ENCODE measurements at regions of chr21 and their contacts with region 1.

Region 1: DNA sequence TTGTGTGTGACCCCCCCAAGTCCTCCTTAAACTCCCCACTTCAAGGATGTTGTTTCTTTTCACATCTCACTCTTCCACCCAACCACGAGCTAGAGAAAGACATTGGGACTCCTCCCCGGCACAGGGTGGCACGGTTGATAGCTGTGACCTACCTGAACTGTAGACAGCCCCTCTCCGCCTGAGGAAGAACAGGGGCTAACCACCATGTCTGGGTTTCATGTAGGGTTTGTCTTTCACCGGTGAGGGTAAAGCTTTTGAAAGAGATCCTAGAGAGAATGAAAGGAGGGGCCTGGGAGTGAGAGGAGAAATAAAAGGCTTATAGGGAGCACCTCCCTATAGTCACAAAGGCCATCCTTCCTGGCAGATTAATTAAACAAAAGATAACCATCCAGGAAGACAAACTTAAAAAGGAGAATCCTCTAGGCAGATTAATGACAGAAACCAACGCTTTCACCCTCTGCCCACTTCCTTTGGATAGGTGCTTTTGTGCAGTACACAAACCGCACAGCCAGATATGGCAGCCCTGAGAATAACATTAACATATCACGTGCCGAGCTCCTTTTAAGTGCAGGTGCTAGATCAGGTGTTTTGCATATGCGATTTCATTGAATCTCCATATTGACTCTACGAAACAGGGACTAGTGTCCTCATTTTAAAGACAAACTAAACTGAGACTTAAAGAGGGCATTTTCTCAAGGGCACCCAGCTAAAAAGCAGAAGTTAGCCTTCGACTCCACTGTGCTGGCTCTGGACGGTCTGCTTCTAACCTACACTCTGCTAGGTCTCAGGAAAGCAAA is 178.0 kb upstream of the RUNX1 start:
- DNase-seq: no peak
- H3K4me3 ChIP-seq: peak overlapping the region; percentile 13; the same call in 1 of the 2 replicates
- H3K27ac ChIP-seq: peak overlapping the region; percentile 99
- H3K4me1 ChIP-seq: peaks cover 85% of the 10 kb centered on the region
- H3K27me3 ChIP-seq: no peaks in the 10 kb centered on the region
- CTCF ChIP-seq: no peak

Region 2: GRCh38 chr21:34881894-34882371 is 345.2 kb before region 1 on chr21:
- CTCF ChIA-PET with region 1: interaction called, 11 read pairs
- POLR2A ChIA-PET with region 1: no interaction called
- intact Hi-C with region 1: no loop called
- DNase-seq: peak in 1 of 2 experiments; percentile 87
- H3K4me3 ChIP-seq: peak overlapping the region; percentile 97
- H3K27ac ChIP-seq: peak overlapping the region; percentile 99
- H3K4me1 ChIP-seq: peaks cover 69% of the 10 kb centered on the region
- H3K27me3 ChIP-seq: no peaks in the 10 kb centered on the region
- CTCF ChIP-seq: no peak

Region 3: GRCh38 chr21:34952701-34953100 is 274.4 kb before region 1 on chr21:
- CTCF ChIA-PET with region 1: no interaction called
- POLR2A ChIA-PET with region 1: no interaction called
- intact Hi-C with region 1: loop called (anchors 10 kb)
- DNase-seq: peak in 1 of 2 experiments; percentile 43
- H3K4me3 ChIP-seq: no peak overlapping the region
- H3K27ac ChIP-seq: no peak overlapping the region
- H3K4me1 ChIP-seq: 0 out of 2 replicates have a peak, but pooled peaks cover 9% of the 10 kb centered on the region
- H3K27me3 ChIP-seq: no peaks in the 10 kb centered on the region
- CTCF ChIP-seq: no peak

Region 4: DNA sequence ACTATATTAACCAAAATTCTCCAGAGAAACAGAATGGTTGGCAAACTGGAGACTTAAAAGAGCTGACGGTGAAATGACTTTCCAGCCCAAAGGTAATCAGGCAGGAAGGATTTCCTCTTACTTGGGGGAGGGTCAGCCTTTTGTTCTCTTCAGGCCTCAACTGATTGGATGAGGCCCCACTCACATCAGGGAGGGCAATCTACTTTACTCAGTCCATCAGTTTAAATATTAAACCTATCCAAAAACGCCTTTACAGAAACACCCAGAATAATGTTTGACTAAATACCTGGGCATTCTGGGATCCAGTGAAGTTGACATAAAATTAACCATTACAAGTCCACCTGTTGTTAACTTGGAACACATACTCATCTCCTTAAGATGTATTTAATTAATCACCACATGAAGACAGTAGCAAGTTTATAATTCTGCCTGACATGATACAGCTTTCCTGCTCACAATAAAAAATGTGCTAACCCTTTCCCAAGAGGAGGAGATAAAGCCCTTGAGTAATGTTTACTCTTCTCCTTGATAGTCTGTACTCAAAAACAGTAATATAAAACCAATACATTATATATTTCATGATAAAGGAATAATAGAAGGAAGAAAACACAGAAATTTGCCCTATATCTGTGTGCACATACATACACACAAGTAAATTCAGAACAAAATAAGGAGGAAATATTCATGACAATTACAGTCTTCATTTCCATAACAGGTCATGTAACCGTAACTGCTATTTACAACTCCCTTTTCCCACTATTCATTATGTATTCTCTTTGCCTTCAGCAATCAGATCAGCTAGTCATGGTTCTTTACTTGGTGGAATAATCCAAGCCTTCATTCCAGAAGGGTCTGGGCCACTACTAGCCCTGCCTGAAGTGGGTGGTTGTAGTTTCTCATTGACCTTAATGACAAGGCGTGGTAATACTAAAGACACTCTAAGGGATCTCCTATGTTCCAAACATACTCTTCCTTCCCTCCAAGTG is 70.6 kb before region 1 on chr21:
- CTCF ChIA-PET with region 1: interaction called, 13 read pairs
- POLR2A ChIA-PET with region 1: no interaction called
- intact Hi-C with region 1: no loop called
- DNase-seq: no peak
- H3K4me3 ChIP-seq: no peak overlapping the region
- H3K27ac ChIP-seq: no peak overlapping the region
- H3K4me1 ChIP-seq: 0 out of 2 replicates have a peak, but pooled peaks cover 6% of the 10 kb centered on the region
- H3K27me3 ChIP-seq: no peaks in the 10 kb centered on the region
- CTCF ChIP-seq: no peak

Region 5: DNA sequence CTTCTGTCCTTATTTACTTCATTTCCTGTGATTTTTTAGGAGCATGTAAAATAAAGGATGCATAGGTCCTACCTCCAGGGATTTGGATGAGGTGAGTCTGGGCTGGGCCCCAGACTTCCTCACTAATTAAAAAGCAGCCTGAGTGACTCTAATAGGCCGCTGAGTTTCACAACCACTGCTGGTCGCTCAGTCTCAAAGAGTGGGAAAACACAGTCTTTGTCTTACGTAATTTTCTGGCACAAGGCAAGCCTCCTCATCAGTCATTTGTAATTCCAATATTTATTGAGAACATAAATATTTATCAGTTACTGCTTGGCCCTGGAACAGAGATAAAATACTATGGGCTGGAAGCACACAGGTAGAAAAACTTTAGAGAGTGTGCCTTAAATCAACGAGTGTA is 17.4 kb after region 1 on chr21:
- CTCF ChIA-PET with region 1: no interaction called
- POLR2A ChIA-PET with region 1: no interaction called
- intact Hi-C with region 1: no loop called
- DNase-seq: no peak
- H3K4me3 ChIP-seq: no peak overlapping the region
- H3K27ac ChIP-seq: no peak overlapping the region
- H3K4me1 ChIP-seq: peaks cover 27% of the 10 kb centered on the region
- H3K27me3 ChIP-seq: no peaks in the 10 kb centered on the region
- CTCF ChIP-seq: no peak

Region 6: DNA sequence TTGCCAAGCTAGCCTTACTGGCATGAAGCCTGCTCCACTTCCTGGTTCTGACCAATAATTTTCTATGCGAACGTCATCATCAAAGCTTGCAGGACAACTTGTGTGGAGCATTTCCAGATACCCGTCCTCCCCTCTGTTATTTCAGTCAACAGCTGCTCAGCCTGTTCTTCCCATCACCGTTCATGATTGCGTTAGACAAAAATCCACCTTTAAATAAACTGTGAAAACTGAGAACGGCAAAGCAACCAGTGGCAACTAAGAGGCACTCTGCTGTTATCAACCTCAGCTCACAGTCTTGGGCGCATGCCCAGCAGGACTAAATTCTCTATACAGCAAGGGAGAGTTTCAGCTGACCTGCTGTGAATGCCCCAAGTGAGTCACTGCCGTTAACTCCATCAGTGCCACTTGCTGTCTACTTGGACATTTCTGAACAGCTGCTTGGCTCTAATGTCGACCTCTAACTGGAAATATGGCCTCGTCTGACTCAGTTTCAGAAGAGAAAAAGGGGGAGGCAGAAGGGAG is 29.4 kb after region 1 on chr21:
- CTCF ChIA-PET with region 1: no interaction called
- POLR2A ChIA-PET with region 1: interaction called, 3 read pairs
- intact Hi-C with region 1: loop called (anchors 1 kb)
- DNase-seq: peak; percentile 86 to 98
- H3K4me3 ChIP-seq: peak overlapping the region; percentile 42; the same call in 1 of the 2 replicates
- H3K27ac ChIP-seq: peak overlapping the region; percentile 99
- H3K4me1 ChIP-seq: peaks cover 37% of the 10 kb centered on the region
- H3K27me3 ChIP-seq: no peaks in the 10 kb centered on the region
- CTCF ChIP-seq: no peak

Region 7: DNA sequence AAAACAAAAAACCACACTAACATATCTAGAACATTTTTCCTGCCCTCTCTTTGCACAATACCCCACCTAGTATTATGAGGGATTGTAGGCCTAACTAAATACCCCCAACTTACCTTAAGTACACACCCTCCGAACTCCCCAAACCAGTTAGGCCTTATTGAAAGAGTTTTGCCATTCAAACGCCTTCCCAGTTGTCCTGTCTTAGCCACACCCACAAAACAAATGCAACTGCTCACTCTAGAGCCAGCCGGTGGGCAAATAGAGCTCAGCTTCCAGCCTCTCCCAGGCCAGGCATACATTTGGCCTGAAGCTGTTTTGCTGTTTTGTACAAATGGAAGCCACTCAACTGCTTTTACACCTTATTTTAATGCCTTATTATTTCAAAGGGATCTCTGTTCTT is 46.2 kb after region 1 on chr21:
- CTCF ChIA-PET with region 1: no interaction called
- POLR2A ChIA-PET with region 1: interaction called, 19 read pairs
- intact Hi-C with region 1: no loop called
- DNase-seq: peak; percentile 60 to 86
- H3K4me3 ChIP-seq: no peak overlapping the region
- H3K27ac ChIP-seq: peak overlapping the region; percentile 62
- H3K4me1 ChIP-seq: peaks cover 32% of the 10 kb centered on the region
- H3K27me3 ChIP-seq: no peaks in the 10 kb centered on the region
- CTCF ChIP-seq: no peak

Region 8: DNA sequence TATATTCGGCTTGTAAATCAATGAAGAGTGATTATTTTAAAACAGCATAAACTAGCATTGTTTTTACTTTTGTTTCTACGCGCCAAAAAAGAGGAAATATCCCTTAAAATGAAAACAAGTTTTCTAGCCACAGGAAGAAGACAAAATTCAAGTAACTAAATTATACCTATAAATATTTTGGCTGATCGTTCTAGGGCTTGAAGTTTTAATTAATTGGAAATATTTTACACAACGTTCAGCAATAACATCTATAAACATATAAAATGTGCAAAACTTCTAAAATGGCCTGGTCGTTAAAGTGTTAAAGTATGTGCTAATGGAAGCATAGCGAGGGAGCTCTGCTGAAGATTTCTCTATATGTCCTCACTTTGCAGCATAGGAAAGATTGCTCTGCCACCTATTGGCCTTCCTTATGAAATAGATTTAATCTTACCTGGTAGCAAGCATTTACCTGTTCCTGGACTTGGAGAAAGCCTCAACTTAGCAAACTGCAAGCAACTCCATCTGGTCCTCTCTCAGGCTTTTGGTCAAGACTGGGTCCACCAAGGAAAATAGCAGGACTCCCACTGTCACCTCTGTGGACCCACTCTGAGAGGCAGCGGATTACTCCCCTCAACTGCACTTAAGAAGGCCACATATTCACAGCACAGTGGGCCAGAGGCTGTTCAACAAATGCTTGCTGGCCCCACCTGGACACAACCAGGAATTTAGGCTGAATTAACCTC is 173.2 kb after region 1 on chr21:
- CTCF ChIA-PET with region 1: interaction called, 6 read pairs
- POLR2A ChIA-PET with region 1: no interaction called
- intact Hi-C with region 1: loop called (anchors 1 kb)
- DNase-seq: peak; percentile 19 to 77
- H3K4me3 ChIP-seq: no peak overlapping the region
- H3K27ac ChIP-seq: peak overlapping the region; percentile 52
- H3K4me1 ChIP-seq: peaks cover 32% of the 10 kb centered on the region
- H3K27me3 ChIP-seq: no peaks in the 10 kb centered on the region
- CTCF ChIP-seq: peak; percentile 68

Measured in PC-9 (cell line).